Posterior vena cava (tissue), 2 donors: ENCODE measurements at regions of chr7 and their contacts with region 1.

Region 1: GRCh38 chr7:42940985-42941847 is 9.0 kb downstream of the MRPL32 start:
- DNase-seq: peak; percentile 94

Region 2: GRCh38 chr7:43034535-43035002 is 93.4 kb after region 1 on chr7:
- intact Hi-C with region 1: no loop called
- DNase-seq: no peak

Region 3: DNA sequence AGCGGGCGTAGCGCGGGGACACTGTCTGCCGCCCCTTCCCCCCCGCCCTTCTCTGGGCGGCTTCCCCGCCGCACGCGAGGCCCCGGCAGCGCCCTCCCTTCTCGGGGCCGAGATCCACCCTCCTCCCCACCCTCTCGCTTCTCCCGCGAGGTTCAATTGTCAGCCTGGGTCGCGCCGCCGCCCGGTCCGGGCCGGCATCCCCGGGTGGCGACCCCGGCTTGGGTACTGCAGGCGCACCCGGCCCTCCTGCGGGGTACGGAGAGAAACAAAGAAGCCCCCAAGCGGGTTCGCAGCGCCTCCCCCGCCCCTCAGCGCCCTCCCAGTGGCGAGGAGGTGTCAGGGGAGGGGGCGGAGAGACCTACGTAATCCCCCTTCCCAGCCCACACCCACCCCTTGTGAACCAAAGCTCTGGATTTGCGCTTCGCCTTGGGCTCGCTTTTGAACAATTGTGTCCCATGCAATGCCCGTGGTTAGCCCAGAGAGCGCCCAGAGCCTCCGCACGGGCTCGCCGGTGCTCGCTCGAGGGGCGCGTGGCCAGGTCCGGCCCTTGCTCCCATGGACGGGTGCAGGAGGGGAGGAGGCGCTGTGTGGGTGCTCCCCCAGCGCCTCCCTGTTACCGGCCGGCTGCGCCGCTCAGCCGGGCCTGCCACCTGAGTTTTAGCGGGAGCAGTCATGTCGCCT is 171.9 kb after region 1 on chr7:
- intact Hi-C with region 1: loop called in 1 of 2 experiments (anchors 10 kb)
- DNase-seq: peak; percentile 82

Region 4: DNA sequence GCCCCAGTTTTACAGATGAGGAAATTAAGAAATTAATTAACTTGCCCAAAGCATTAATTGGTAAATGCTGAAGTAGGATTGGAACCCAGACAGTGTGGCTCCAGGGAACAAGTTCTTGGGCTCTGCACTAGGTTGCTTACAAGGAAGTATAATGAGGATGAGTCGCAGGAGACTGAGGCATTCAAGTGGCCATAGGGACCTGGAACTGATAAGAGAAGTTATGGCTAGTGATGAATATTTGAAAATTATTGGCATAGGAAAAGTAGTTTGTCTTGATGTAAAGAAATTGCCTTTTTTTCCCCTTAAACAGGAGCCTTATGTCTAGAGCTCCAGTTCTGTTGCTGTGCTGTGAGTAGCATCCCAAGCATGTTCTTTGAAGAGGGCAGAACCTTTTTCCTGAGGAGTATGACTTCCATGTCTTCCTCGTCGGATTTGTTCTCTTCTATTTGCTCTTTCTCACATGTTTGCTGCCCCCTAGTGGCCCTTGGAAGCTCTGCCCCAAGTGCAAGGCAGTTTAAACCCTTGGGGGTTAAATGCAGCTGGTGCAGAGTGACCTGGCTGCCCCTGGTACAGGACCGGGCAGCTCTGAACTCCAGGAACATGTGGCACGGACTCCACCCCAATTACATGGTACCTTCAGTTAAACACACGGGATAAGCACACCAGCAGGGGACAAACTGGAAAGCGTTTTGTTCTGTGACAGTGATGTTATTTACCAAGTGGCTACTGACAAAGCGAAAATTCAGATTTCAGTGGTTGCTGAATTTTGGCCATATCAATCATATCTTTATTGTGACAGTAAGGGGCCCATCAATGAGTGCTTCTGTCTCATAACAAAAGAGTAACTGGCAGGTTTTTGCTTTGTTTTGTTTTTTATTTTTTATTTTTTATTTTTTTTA is 320.0 kb after region 1 on chr7:
- intact Hi-C with region 1: loop called (anchors 5 kb)
- DNase-seq: no peak

Region 5: DNA sequence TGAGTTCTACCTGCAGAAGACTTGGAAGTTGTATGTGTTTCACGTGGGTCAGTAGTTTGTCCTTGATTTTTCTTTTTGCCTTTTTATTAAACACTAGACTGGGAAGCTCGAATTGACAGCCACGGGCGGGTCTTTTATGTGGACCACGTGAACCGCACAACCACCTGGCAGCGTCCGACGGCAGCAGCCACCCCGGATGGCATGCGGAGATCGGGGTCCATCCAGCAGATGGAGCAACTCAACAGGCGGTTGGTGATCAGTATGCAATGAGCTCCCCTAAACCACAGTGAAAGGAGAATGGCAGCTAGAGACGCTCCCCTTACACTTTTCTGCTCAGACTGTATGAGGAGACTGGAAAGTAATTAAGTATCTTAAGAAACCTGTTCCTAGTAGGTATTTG is 515.0 kb after region 1 on chr7:
- intact Hi-C with region 1: loop called in 1 of 2 experiments (anchors 2 kb)
- DNase-seq: no peak